ENCODE measurements at regions of chr5 and their contacts with region 1.

Region 1: GRCh38 chr5:91383027-91383955 is at the start of gene ARRDC3:
- DNase-seq: peak; percentile 95
- H3K4me3 Mint-ChIP-seq: peak within 1 kb of the TSS; percentile 97
- H3K27ac Mint-ChIP-seq: peak within 1 kb of the TSS; percentile 97
- H3K4me1 Mint-ChIP-seq: peaks cover 15% of the 10 kb centered on the region
- H3K27me3 Mint-ChIP-seq: no peaks in the 10 kb centered on the region
- total RNA-seq, gene ARRDC3: 12.8 to 13.8 TPM

Region 2: GRCh38 chr5:90529194-90529938 is 853.9 kb before region 1 on chr5 and contains the start of gene LYSMD3:
- CTCF ChIA-PET with region 1: no interaction called
- intact Hi-C with region 1: loop called (anchors 1 kb)
- DNase-seq: peak; percentile 98
- H3K4me3 Mint-ChIP-seq: peak within 1 kb of the TSS; percentile 95
- H3K27ac Mint-ChIP-seq: peak within 1 kb of the TSS; percentile 90
- H3K4me1 Mint-ChIP-seq: peaks cover 22% of the 10 kb centered on the region
- H3K27me3 Mint-ChIP-seq: peaks cover 6% of the 10 kb centered on the region
- total RNA-seq, gene LYSMD3: 10.2 to 11.1 TPM

Region 3: DNA sequence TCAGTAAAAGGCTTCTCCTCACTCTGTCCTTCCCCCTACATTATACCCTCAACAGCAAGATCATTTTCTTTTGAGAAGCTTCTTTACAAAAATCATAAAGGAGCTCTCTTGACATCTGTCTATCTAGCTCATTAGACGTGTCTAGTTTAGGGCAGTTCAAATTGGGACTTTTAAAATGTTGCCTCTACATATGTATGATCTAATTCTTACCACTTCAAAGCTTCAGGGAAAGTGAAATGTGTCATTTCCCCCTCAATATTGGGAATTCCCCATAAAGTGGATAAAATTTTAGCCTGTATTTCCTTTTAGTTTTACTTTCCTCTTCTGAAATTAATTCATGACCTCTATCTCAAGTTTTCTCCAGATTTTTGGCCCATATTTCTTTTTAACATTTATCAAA is 323.9 kb before region 1 on chr5:
- CTCF ChIA-PET with region 1: interaction called, 6 read pairs
- intact Hi-C with region 1: loop called (anchors 1 kb)
- DNase-seq: no peak
- H3K4me3 Mint-ChIP-seq: no peak overlapping the region
- H3K27ac Mint-ChIP-seq: no peak overlapping the region
- H3K4me1 Mint-ChIP-seq: peaks cover 28% of the 10 kb centered on the region
- H3K27me3 Mint-ChIP-seq: peaks cover 40% of the 10 kb centered on the region

Region 4: GRCh38 chr5:91183737-91184136 is 199.6 kb before region 1 on chr5:
- CTCF ChIA-PET with region 1: interaction called, 17 read pairs
- intact Hi-C with region 1: no loop called
- DNase-seq: no peak
- H3K4me3 Mint-ChIP-seq: no peak overlapping the region
- H3K27ac Mint-ChIP-seq: no peak overlapping the region
- H3K4me1 Mint-ChIP-seq: peaks cover 9% of the 10 kb centered on the region
- H3K27me3 Mint-ChIP-seq: peaks cover 10% of the 10 kb centered on the region

Region 5: GRCh38 chr5:91266184-91266705 is 117.0 kb before region 1 on chr5:
- CTCF ChIA-PET with region 1: interaction called, 17 read pairs
- intact Hi-C with region 1: loop called (anchors 1 kb)
- DNase-seq: no peak
- H3K4me3 Mint-ChIP-seq: no peak overlapping the region
- H3K27ac Mint-ChIP-seq: no peak overlapping the region
- H3K4me1 Mint-ChIP-seq: peaks cover 22% of the 10 kb centered on the region
- H3K27me3 Mint-ChIP-seq: no peaks in the 10 kb centered on the region

Region 6: DNA sequence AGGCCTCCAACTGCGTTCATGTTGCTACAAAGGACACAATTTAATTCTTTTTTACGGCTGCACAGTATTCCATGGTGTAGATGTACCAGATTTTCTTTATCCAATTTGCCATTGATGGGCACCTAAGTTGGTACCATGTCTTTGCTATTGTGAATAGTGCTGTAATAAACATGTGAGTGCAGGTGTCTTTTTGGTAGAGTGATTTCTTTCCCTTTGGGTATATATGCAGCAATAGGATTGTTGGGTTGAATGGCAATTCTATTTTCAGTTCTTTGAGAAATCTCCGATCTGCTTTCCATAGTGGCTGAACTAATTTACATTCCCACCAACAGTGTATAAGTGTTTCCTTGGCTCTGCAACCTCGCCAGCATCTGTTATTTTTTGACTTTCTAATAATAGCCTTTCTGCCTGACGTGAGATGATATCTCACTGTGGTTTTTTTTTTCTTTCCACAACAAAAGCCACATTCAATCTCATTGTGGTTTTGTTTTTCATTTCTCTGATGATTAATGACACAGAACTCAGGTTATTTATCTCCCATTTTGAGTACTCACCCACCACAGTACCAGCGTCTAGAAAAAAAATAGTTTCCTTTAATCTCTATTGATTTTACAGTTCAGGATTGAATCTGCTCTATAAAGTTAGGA is 22.1 kb before region 1 on chr5:
- CTCF ChIA-PET with region 1: interaction called, 4 read pairs
- intact Hi-C with region 1: loop called (anchors 1 kb)
- DNase-seq: no peak
- H3K4me3 Mint-ChIP-seq: no peak overlapping the region
- H3K27ac Mint-ChIP-seq: peak overlapping the region; percentile 26
- H3K4me1 Mint-ChIP-seq: peaks cover 10% of the 10 kb centered on the region
- H3K27me3 Mint-ChIP-seq: no peaks in the 10 kb centered on the region

Region 7: GRCh38 chr5:91474201-91474600 is 90.9 kb after region 1 on chr5:
- CTCF ChIA-PET with region 1: no interaction called
- intact Hi-C with region 1: no loop called
- DNase-seq: no peak
- H3K4me3 Mint-ChIP-seq: no peak overlapping the region
- H3K27ac Mint-ChIP-seq: no peak overlapping the region
- H3K4me1 Mint-ChIP-seq: peaks cover 4% of the 10 kb centered on the region
- H3K27me3 Mint-ChIP-seq: no peaks in the 10 kb centered on the region

Region 8: DNA sequence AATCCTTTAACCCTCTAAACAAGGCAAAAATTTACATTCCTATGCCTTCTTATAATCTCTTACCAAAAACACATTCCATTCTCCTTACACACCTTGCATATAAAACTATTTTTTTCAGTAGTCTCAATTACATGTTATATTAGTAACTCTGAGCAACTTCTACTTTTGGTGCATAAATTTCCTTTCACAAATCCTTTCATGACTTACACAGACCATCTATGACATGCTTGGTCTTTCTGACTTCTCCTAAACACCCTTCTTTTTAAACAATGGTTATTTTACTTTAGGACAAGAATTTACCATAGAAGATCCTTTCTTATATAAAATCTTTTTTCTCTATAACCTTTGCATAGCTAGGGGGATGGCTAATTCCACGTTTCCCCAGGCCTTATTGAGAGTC is 207.8 kb after region 1 on chr5:
- CTCF ChIA-PET with region 1: no interaction called
- intact Hi-C with region 1: no loop called
- DNase-seq: no peak
- H3K4me3 Mint-ChIP-seq: no peak overlapping the region
- H3K27ac Mint-ChIP-seq: no peak overlapping the region
- H3K4me1 Mint-ChIP-seq: no peaks in the 10 kb centered on the region
- H3K27me3 Mint-ChIP-seq: no peaks in the 10 kb centered on the region

Region 9: DNA sequence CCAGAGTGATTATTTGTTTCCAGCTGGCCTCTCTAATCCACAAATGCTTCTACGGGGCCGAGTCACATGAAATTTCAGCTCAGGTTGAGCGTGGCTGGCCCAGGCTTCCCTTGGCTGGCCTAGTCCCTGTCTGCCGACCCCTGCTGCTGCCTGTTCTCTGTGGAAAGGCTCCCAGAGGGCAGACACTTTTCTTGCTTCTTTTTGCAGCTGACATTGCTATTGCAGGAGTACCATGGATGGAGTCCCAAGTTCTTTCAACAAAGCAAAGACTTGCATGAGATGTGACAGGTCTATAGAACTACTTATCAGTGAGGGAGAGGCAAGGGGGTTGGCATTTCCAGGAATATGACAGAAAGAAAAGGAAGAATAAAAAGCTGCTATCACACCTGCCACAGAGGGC is 287.3 kb after region 1 on chr5:
- CTCF ChIA-PET with region 1: no interaction called
- intact Hi-C with region 1: no loop called
- DNase-seq: no peak
- H3K4me3 Mint-ChIP-seq: no peak overlapping the region
- H3K27ac Mint-ChIP-seq: no peak overlapping the region
- H3K4me1 Mint-ChIP-seq: no peaks in the 10 kb centered on the region
- H3K27me3 Mint-ChIP-seq: no peaks in the 10 kb centered on the region